HCT116 (cell line): ENCODE measurements at regions of chr1 and their contacts with region 1.

Region 1: GRCh38 chr1:91997607-91998195 is 32.1 kb upstream of the EPHX4 start:
- DNase-seq: peak; percentile 33
- ATAC-seq: no peak
- H3K4me3 ChIP-seq: no peak overlapping the region
- H3K27ac ChIP-seq: no peak overlapping the region
- H3K4me1 ChIP-seq: no peaks in the 10 kb centered on the region
- H3K27me3 ChIP-seq: no peaks in the 10 kb centered on the region
- CTCF ChIP-seq: peak; percentile 63 to 81 (median 66); a peak in 5 of 6 replicates
- POLR2A ChIP-seq: no peak
- RAD21 ChIP-seq: peak; percentile 86

Region 2: DNA sequence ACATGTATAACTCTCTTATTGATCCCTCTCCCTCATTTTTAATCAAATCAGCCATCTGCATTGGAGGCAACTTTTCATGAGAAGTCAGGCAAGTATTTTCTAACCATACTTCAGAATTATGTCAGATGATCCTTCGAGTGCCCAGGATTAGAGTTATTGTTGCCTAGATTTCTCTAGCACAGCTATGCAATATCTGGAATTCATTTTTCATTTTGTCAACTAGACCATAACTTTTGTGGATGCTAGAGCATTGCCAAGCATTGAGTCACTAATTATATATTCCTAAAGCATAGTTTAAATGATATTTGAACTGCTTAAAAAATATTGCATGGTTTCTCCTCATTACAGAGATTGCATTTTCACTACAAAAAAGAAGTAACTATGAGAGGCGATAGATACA is 614.2 kb before region 1 on chr1:
- CTCF ChIA-PET with region 1: no interaction called
- POLR2A ChIA-PET with region 1: no interaction called
- RAD21 ChIA-PET with region 1: no interaction called
- intact Hi-C with region 1: no loop called
- DNase-seq: no peak
- ATAC-seq: no peak
- H3K4me3 ChIP-seq: no peak overlapping the region
- H3K27ac ChIP-seq: no peak overlapping the region
- H3K4me1 ChIP-seq: no peaks in the 10 kb centered on the region
- H3K27me3 ChIP-seq: no peaks in the 10 kb centered on the region
- CTCF ChIP-seq: no peak
- POLR2A ChIP-seq: no peak
- RAD21 ChIP-seq: no peak

Region 3: GRCh38 chr1:92219028-92219427 is 221.3 kb after region 1 on chr1:
- CTCF ChIA-PET with region 1: no interaction called
- POLR2A ChIA-PET with region 1: no interaction called
- RAD21 ChIA-PET with region 1: no interaction called
- intact Hi-C with region 1: no loop called
- DNase-seq: no peak
- ATAC-seq: no peak
- H3K4me3 ChIP-seq: no peak overlapping the region
- H3K27ac ChIP-seq: no peak overlapping the region
- H3K4me1 ChIP-seq: no peaks in the 10 kb centered on the region
- H3K27me3 ChIP-seq: no peaks in the 10 kb centered on the region
- CTCF ChIP-seq: no peak
- POLR2A ChIP-seq: no peak
- RAD21 ChIP-seq: no peak

Region 4: DNA sequence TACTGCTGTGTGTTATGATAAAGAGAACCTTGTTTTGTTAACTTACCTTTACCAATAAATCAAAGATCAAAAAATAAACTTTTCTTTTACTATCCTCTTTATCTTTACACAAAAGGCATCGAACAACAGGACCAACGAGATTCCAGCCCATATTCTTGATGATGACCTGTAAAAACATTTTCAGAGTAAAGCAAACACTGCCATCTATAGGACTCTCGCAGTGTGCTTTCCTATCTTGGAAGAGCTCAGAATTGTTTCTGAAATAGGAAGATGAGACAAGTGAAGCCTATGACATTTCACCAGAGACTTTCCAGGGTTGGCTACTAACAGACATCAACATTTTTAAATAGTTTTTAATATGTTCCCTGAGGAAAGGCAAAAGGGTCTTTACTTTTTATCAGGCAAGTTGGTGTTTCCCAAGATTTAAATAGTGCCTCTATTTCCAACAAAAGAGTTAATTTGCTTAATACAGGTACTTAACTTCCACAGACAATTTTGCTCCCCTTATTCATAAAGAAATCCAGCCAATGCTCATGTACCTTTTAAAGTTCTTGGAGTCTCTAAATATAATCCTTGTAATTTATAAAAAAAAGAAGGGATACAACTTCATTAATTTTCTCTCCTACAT is 293.8 kb after region 1 on chr1:
- CTCF ChIA-PET with region 1: interaction called, 86 read pairs
- POLR2A ChIA-PET with region 1: no interaction called
- RAD21 ChIA-PET with region 1: interaction called, 5 to 8 read pairs
- intact Hi-C with region 1: loop called (anchors 1 kb)
- DNase-seq: peak; percentile 52
- ATAC-seq: peak; percentile 70
- H3K4me3 ChIP-seq: no peak overlapping the region
- H3K27ac ChIP-seq: no peak overlapping the region
- H3K4me1 ChIP-seq: no peaks in the 10 kb centered on the region
- H3K27me3 ChIP-seq: no peaks in the 10 kb centered on the region
- CTCF ChIP-seq: peak; percentile 67 to 79 (median 69); a peak in 5 of 6 replicates
- POLR2A ChIP-seq: no peak
- RAD21 ChIP-seq: peak; percentile 85

Region 5: GRCh38 chr1:92298573-92299476 is 301.1 kb after region 1 on chr1 and contains the starts of genes GLMN and RPAP2:
- CTCF ChIA-PET with region 1: interaction called, 10 read pairs
- POLR2A ChIA-PET with region 1: no interaction called
- RAD21 ChIA-PET with region 1: interaction called in 1 of 2 experiments, 4 read pairs
- intact Hi-C with region 1: no loop called
- DNase-seq: peak; percentile 72
- ATAC-seq: peak; percentile 99
- H3K4me3 ChIP-seq: peak within 1 kb of the TSS; percentile 89 to 92
- H3K27ac ChIP-seq: peak within 1 kb of the TSS; percentile 86
- H3K4me1 ChIP-seq: peaks cover 0 to 9% of the 10 kb centered on the region in 2 experiments; a peak in 2 of 4 replicates
- H3K27me3 ChIP-seq: no peaks in the 10 kb centered on the region
- CTCF ChIP-seq: no peak; a peak in 1 of 6 replicates
- POLR2A ChIP-seq: peak; percentile 85
- RAD21 ChIP-seq: no peak
- total RNA-seq, gene GLMN: 10.9 TPM
- total RNA-seq, gene RPAP2: 28.1 TPM

Region 6: GRCh38 chr1:92310185-92310597 is 312.5 kb after region 1 on chr1:
- CTCF ChIA-PET with region 1: interaction called, 15 read pairs
- POLR2A ChIA-PET with region 1: no interaction called
- RAD21 ChIA-PET with region 1: no interaction called
- intact Hi-C with region 1: no loop called
- DNase-seq: no peak
- ATAC-seq: peak; percentile 57; the same call in 1 of the 2 replicates
- H3K4me3 ChIP-seq: no peak overlapping the region
- H3K27ac ChIP-seq: no peak overlapping the region
- H3K4me1 ChIP-seq: no peaks in the 10 kb centered on the region
- H3K27me3 ChIP-seq: no peaks in the 10 kb centered on the region
- CTCF ChIP-seq: peak; percentile 43 to 74 (median 66)
- POLR2A ChIP-seq: no peak
- RAD21 ChIP-seq: peak; percentile 75

Region 7: DNA sequence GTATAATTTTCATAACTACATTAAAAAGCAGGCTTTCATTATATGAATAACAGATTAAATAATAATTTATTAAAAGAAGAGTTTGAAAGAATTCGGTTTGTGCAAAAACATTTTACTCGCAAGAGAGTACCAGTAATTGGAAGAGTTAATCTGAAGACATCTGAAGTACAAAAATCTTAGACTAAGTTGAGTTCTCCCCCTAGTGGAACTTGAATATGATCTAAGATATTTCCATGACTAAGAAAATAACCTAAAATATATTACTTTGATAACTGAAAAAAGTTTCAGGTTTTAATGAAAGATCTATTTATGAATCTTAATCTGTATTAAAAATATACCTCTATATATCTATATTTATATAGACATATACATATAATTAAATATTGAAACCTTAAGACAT is 601.5 kb after region 1 on chr1:
- CTCF ChIA-PET with region 1: no interaction called
- POLR2A ChIA-PET with region 1: no interaction called
- RAD21 ChIA-PET with region 1: no interaction called
- intact Hi-C with region 1: loop called (anchors 2 kb)
- DNase-seq: peak; percentile 23
- ATAC-seq: no peak
- H3K4me3 ChIP-seq: no peak overlapping the region
- H3K27ac ChIP-seq: no peak overlapping the region
- H3K4me1 ChIP-seq: no peaks in the 10 kb centered on the region
- H3K27me3 ChIP-seq: no peaks in the 10 kb centered on the region
- CTCF ChIP-seq: peak; percentile 33 to 54 (median 35); a peak in 3 of 6 replicates
- POLR2A ChIP-seq: no peak
- RAD21 ChIP-seq: peak; percentile 64

Region 8: GRCh38 chr1:92623187-92623778 is 625.6 kb after region 1 on chr1:
- CTCF ChIA-PET with region 1: interaction called, 3 read pairs
- POLR2A ChIA-PET with region 1: no interaction called
- RAD21 ChIA-PET with region 1: no interaction called
- intact Hi-C with region 1: loop called (anchors 1 kb)
- DNase-seq: peak; percentile 1
- ATAC-seq: peak; percentile 75
- H3K4me3 ChIP-seq: no peak overlapping the region
- H3K27ac ChIP-seq: no peak overlapping the region
- H3K4me1 ChIP-seq: no peaks in the 10 kb centered on the region
- H3K27me3 ChIP-seq: no peaks in the 10 kb centered on the region
- CTCF ChIP-seq: peak; percentile 19 to 53 (median 35); a peak in 4 of 6 replicates
- POLR2A ChIP-seq: no peak
- RAD21 ChIP-seq: peak; percentile 68

Region 9: GRCh38 chr1:92817986-92818764 is 820.5 kb after region 1 on chr1:
- CTCF ChIA-PET with region 1: interaction called, 8 read pairs
- POLR2A ChIA-PET with region 1: no interaction called
- RAD21 ChIA-PET with region 1: no interaction called
- intact Hi-C with region 1: loop called (anchors 5 kb)
- DNase-seq: peak; percentile 36
- ATAC-seq: peak; percentile 79
- H3K4me3 ChIP-seq: no peak overlapping the region
- H3K27ac ChIP-seq: no peak overlapping the region
- H3K4me1 ChIP-seq: peaks cover 0 to 15% of the 10 kb centered on the region in 2 experiments; a peak in 1 of 4 replicates
- H3K27me3 ChIP-seq: no peaks in the 10 kb centered on the region
- CTCF ChIP-seq: peak; percentile 63 to 78 (median 73)
- POLR2A ChIP-seq: no peak
- RAD21 ChIP-seq: peak; percentile 61